ENCODE measurements at regions of chr3 and their contacts with region 1.

Region 1: DNA sequence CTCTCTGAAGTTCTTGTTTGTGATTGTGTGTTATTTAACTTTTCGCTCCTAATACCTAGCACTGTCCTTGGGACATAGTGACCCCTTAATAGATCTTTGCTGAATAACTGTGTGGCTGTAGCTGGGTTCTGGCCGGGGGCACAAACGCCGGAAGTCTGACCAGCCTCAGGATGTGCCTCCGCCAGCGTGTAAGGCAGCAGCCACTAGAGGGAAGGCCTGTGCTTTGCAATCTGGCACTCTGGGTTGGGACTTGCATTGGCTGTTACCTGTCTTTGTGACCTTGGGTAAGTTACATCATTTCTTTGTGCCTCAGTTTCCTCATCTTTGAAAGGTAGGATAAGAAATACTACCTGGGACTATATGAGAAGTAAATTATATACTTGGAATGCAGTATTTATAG is 158.7 kb downstream of the GHSR start:
- DNase-seq: peak in 4 of 5 donors; percentile 45 to 52 (median 48)
- ATAC-seq: peak in 3 of 4 donors; percentile 39 to 61 (median 48)
- H3K4me3 ChIP-seq: peak overlapping the region in 1 of 12 donors; percentile 6
- H3K27ac ChIP-seq: peak overlapping the region; percentile 3 to 87 (median 72)
- H3K4me1 ChIP-seq: peaks cover 0 to 83% (median 53%) of the 10 kb centered on the region in 12 donors
- H3K27me3 ChIP-seq: no peaks in the 10 kb centered on the region
- CTCF ChIP-seq: peak; percentile 39 to 72 (median 53)
- POLR2A ChIP-seq: no peak

Region 2: DNA sequence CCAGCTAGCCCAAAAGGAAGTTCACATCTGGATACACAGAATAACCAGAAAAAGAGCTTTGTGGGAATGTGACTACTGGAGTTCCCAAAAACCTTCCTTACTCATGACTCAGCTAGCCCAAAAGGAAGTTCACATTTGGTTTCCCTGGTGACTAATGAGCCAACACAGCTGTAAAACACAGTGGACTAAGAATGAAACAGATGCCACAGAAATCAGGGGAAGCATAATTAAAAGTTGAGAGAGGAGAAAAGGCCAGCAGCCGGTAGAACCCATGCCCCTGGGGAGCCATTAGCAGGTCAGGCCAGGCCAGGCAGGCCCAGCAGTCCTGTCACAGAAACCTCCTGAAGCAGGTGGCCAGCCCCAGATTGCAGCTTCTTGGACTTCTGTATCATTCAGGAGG is 28.4 kb after region 1 on chr3:
- intact Hi-C with region 1: loop called in 1 of 10 experiments (anchors 5 kb)
- DNase-seq: peak; percentile 71 to 82 (median 75)
- ATAC-seq: peak; percentile 21 to 74 (median 72)
- H3K4me3 ChIP-seq: no peak overlapping the region
- H3K27ac ChIP-seq: peak overlapping the region; percentile 61 to 91 (median 83)
- H3K4me1 ChIP-seq: peaks cover 20 to 96% (median 91%) of the 10 kb centered on the region in 12 donors
- H3K27me3 ChIP-seq: no peaks in the 10 kb centered on the region
- CTCF ChIP-seq: no peak
- POLR2A ChIP-seq: no peak

Region 3: GRCh38 chr3:172332256-172333041 is 42.9 kb after region 1 on chr3:
- intact Hi-C with region 1: loop called in 1 of 10 experiments (anchors 5 kb)
- DNase-seq: peak in 4 of 5 donors; percentile 50 to 63 (median 54)
- ATAC-seq: peak; percentile 76 to 89 (median 86)
- H3K4me3 ChIP-seq: no peak overlapping the region
- H3K27ac ChIP-seq: peak overlapping the region in 8 of 12 donors; percentile 3 to 63 (median 34)
- H3K4me1 ChIP-seq: peaks cover 0 to 11% (median 5%) of the 10 kb centered on the region in 12 donors
- H3K27me3 ChIP-seq: no peaks in the 10 kb centered on the region
- CTCF ChIP-seq: peak; percentile 82 to 95 (median 90)
- POLR2A ChIP-seq: no peak

Region 4: GRCh38 chr3:172476347-172476746 is 186.8 kb after region 1 on chr3:
- intact Hi-C with region 1: no loop called
- DNase-seq: no peak
- ATAC-seq: peak; percentile 17 to 51 (median 30)
- H3K4me3 ChIP-seq: peak overlapping the region in 8 of 12 donors; percentile 17 to 63 (median 52)
- H3K27ac ChIP-seq: peak overlapping the region in 3 of 12 donors; percentile 27 to 67 (median 59)
- H3K4me1 ChIP-seq: peaks cover 0 to 20% (median 0%) of the 10 kb centered on the region in 12 donors
- H3K27me3 ChIP-seq: no peaks in the 10 kb centered on the region
- CTCF ChIP-seq: no peak
- POLR2A ChIP-seq: no peak